ENCODE measurements at regions of chr19 and their contacts with region 1.

Region 1: DNA sequence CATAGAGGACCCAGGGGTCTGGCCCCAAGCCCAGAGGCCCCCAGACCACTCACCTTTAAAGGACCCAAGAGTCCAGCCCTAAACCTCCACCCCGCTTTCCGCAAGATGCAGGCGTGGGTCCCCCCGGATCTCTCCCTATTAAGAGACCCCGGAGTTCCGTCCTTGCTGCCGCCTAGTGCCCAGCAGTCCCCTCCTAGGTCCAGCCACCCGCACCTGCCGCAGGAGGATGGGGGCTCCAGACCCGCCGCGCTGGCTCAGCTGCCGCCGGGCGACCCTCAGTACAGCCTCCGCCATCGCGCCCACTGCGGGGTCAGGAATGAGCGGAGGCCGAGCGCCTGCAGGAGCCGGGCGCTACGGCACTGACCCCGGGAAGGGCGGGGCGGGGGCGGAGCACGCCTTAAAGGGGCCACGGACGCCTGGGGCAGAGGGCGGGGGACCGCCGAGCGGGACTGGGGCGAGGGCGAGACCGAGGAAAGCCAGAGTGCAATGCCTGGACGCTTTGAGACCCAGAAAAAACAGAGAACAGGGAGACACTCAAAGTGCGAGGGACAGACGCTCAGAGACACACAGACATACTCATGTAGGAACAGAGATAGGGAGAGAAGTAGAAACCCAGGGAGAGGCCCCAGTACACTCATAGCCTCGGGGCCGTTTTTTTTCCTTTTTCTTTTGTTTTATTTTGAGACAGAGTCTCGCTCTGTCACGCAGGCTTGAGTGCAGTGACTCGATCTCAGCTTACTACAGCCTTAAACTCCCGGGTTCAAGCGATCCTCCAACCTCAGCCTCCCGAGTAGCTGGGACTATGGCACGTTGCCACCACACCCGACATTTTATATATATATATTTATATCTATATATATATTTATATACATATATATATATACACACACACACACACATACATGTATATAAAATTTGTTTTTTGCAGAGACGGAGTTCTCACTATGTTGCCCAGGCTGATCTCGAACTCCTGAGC is at the start of gene ETHE1:
- DNase-seq: peak; percentile 73
- H3K4me3 Mint-ChIP-seq: peak within 1 kb of the TSS; percentile 97
- H3K27ac Mint-ChIP-seq: peak within 1 kb of the TSS; percentile 96
- H3K4me1 Mint-ChIP-seq: peaks cover 22% of the 10 kb centered on the region
- H3K27me3 Mint-ChIP-seq: no peaks in the 10 kb centered on the region
- total RNA-seq, gene ETHE1: 62.1 to 64.4 TPM

Region 2: GRCh38 chr19:43433358-43433673 is 93.9 kb before region 1 on chr19:
- CTCF ChIA-PET with region 1: interaction called, 54 read pairs
- intact Hi-C with region 1: no loop called
- DNase-seq: no peak
- H3K4me3 Mint-ChIP-seq: no peak overlapping the region
- H3K27ac Mint-ChIP-seq: no peak overlapping the region
- H3K4me1 Mint-ChIP-seq: peaks cover 32% of the 10 kb centered on the region
- H3K27me3 Mint-ChIP-seq: no peaks in the 10 kb centered on the region

Region 3: GRCh38 chr19:43639519-43640423 is 112.6 kb after region 1 on chr19 and contains the start of gene CADM4:
- CTCF ChIA-PET with region 1: no interaction called
- intact Hi-C with region 1: no loop called
- DNase-seq: peak; percentile 49
- H3K4me3 Mint-ChIP-seq: peak within 1 kb of the TSS; percentile 72
- H3K27ac Mint-ChIP-seq: no peak within 1 kb of the TSS
- H3K4me1 Mint-ChIP-seq: peaks cover 13% of the 10 kb centered on the region
- H3K27me3 Mint-ChIP-seq: peaks cover 20% of the 10 kb centered on the region
- total RNA-seq, gene CADM4: 0.64 to 0.67 TPM

Measured in activated naive CD4-positive, alpha-beta T cell treated with anti-CD3 and anti-CD28 coated beads for 36 hours (primary cell).